Lower leg skin (tissue), 4 donors: ENCODE measurements at regions of chr11 and their contacts with region 1.

Region 1: DNA sequence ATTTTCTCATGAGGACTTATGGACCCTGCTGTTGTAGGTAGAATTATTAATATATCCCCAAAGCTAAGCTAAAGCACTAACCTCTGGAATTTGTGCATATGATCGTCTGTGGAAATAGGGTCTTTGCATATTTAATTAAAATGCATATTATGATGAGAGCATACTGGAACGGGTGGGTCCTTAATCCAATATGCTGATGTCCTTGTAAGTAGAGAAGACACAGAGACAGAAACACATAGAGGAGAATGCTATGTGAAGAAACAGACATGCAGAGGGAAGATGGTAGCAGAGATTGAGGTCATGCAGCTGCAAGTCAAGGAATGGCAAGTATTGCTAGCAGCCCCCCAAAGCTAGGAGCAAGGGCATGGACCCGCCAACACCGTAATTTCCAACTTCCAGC is 439.2 kb downstream of the LRRC4C start:
- DNase-seq: no peak
- H3K4me3 ChIP-seq: no peak overlapping the region
- CTCF ChIP-seq: no peak
- POLR2A ChIP-seq: no peak

Region 2: GRCh38 chr11:41045266-41045665 is 25.0 kb after region 1 on chr11:
- intact Hi-C with region 1: loop called (anchors 1 kb)
- DNase-seq: no peak
- H3K4me3 ChIP-seq: no peak overlapping the region
- CTCF ChIP-seq: no peak
- POLR2A ChIP-seq: no peak